Activated naive CD4-positive, alpha-beta T cell treated with anti-CD3 and anti-CD28 coated beads for 36 hours (primary cell): ENCODE measurements at regions of chr11 and their contacts with region 1.

Region 1: DNA sequence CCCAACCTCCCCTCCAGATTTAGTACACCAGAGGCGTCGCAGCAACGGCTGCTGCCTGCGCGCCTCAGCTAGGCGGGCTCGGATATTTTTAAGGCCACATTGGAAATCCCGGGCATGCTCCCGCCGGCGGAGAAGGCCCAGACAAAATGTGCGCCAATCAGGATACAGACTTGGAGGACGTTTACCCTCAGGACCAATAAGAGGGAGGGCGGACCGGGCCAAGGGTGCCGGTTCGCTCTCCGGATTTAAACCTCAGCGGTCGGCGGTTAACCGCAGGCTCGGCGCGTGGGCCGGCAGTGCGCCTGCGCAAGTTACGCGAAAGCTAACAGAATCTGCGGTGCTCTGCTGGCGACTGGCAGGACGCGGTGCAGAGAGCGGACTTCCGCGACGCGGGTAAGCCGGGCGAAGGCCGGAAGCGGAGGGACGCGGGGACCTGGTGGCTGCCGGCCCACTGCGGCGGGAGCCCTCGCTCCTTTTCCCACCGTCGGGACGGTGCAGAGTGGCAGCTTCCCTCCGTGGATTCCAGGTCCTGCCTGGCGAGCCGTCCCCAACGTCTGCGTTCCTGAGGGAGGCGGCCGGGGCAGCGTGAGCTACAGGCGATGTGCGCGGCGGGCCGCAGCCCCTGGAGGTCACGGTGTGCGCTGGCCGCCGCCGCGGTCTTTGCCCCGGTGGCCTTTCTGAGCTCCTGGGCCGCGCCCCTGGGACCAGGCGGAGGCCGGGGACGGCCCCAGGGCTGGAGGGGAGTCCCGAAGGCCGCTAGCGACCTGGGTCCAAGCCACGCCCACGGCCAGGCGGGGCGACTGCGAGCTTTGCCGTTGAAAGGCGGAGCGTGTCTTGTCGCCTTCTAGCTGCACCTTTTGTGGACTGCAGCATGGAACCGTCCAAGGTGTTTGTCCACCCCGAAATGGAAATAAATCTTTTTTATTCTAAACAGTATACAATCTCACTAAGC is at the start of gene HYLS1:
- DNase-seq: peak; percentile 97
- H3K4me3 Mint-ChIP-seq: peak within 1 kb of the TSS; percentile 81
- H3K27ac Mint-ChIP-seq: peak within 1 kb of the TSS; percentile 88
- H3K4me1 Mint-ChIP-seq: peaks cover 35% of the 10 kb centered on the region
- H3K27me3 Mint-ChIP-seq: no peaks in the 10 kb centered on the region
- total RNA-seq, gene HYLS1: 10.2 to 11.7 TPM

Region 2: GRCh38 chr11:125164422-125165110 is 723.1 kb before region 1 on chr11 and contains the start of gene PKNOX2:
- CTCF ChIA-PET with region 1: no interaction called
- intact Hi-C with region 1: loop called (anchors 10 kb)
- DNase-seq: peak; percentile 74
- H3K4me3 Mint-ChIP-seq: peak within 1 kb of the TSS; percentile 85
- H3K27ac Mint-ChIP-seq: no peak within 1 kb of the TSS
- H3K4me1 Mint-ChIP-seq: peaks cover 15% of the 10 kb centered on the region
- H3K27me3 Mint-ChIP-seq: peaks cover 43% of the 10 kb centered on the region
- total RNA-seq, gene PKNOX2: not detected

Region 3: GRCh38 chr11:125592305-125593112 is 295.1 kb before region 1 on chr11 and contains the start of gene STT3A:
- CTCF ChIA-PET with region 1: no interaction called
- intact Hi-C with region 1: loop called (anchors 1 kb)
- DNase-seq: peak; percentile 99
- H3K4me3 Mint-ChIP-seq: peak within 1 kb of the TSS; percentile 100
- H3K27ac Mint-ChIP-seq: peak within 1 kb of the TSS; percentile 92
- H3K4me1 Mint-ChIP-seq: peaks cover 51% of the 10 kb centered on the region
- H3K27me3 Mint-ChIP-seq: no peaks in the 10 kb centered on the region
- total RNA-seq, gene STT3A: 111 to 113 TPM

Region 4: GRCh38 chr11:125902927-125903710 is 15.5 kb after region 1 on chr11 and contains the start of gene PUS3:
- CTCF ChIA-PET with region 1: interaction called, 8 read pairs
- intact Hi-C with region 1: loop called (anchors 1 kb)
- DNase-seq: peak; percentile 93
- H3K4me3 Mint-ChIP-seq: peak within 1 kb of the TSS; percentile 94
- H3K27ac Mint-ChIP-seq: peak within 1 kb of the TSS; percentile 95
- H3K4me1 Mint-ChIP-seq: peaks cover 37% of the 10 kb centered on the region
- H3K27me3 Mint-ChIP-seq: peaks cover 22% of the 10 kb centered on the region
- total RNA-seq, gene PUS3: 14.9 to 18.5 TPM

Region 5: GRCh38 chr11:126268708-126269579 is 381.3 kb after region 1 on chr11 and contains the starts of genes FOXRED1 and SRPRA:
- CTCF ChIA-PET with region 1: no interaction called
- intact Hi-C with region 1: loop called (anchors 1 kb)
- DNase-seq: peak; percentile 100
- H3K4me3 Mint-ChIP-seq: peak within 1 kb of the TSS; percentile 93
- H3K27ac Mint-ChIP-seq: peak within 1 kb of the TSS; percentile 95
- H3K4me1 Mint-ChIP-seq: peaks cover 33% of the 10 kb centered on the region
- H3K27me3 Mint-ChIP-seq: no peaks in the 10 kb centered on the region
- total RNA-seq, gene FOXRED1: 41.2 to 48.6 TPM
- total RNA-seq, gene SRPRA: 137 to 142 TPM